ENCODE measurements at regions of chr22 and their contacts with region 1.

Region 1: DNA sequence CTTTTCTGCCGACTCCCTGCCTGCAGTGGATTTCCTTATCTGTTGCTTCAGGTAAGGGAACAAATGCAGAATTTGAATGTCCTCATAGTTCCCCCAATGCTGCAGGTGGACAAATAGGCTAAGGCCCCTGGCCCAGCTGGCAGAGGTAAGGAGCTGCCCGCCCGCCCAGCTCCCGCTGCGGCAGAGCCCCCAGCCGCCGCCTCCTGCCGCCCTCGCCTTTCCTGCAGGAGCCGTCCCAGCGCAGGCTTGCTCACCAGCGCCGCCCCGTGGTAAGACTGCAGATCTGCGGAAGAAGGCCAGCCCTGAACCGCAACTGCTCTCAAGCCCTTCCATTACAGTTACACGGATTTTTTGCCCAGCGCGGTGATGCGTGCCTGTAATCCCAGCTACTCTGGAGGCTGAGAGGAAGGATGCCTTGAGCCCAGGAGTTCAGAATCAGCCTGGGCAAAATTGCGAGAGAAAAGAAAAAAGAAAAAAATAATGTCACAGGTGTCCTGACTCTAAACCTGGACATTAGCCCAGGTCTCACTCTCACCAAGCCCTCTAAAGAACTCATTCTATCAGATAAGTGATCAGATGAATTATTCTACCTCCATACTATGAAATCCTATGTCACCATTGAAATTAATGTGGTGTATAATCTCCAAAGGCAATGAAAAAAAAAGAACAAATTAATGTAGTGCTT is 51.2 kb upstream of the EMID1 start:
- DNase-seq: peak; percentile 89
- ATAC-seq: peak; percentile 58
- H3K4me3 Mint-ChIP-seq: no peak overlapping the region
- H3K27ac Mint-ChIP-seq: no peak overlapping the region
- H3K4me1 Mint-ChIP-seq: peaks cover 49% of the 10 kb centered on the region
- H3K27me3 Mint-ChIP-seq: 0 out of 2 replicates have a peak, but pooled peaks cover 2% of the 10 kb centered on the region
- CTCF ChIP-seq: peak; percentile 97

Region 2: GRCh38 chr22:29040385-29041275 is 113.9 kb before region 1 on chr22:
- CTCF ChIA-PET with region 1: interaction called, 43 read pairs
- POLR2A ChIA-PET with region 1: no interaction called
- DNase-seq: peak; percentile 68
- ATAC-seq: peak; percentile 81
- H3K4me3 Mint-ChIP-seq: no peak overlapping the region
- H3K27ac Mint-ChIP-seq: peak overlapping the region; percentile 72
- H3K4me1 Mint-ChIP-seq: peaks cover 3% of the 10 kb centered on the region; the same call in 1 of the 2 replicates
- H3K27me3 Mint-ChIP-seq: no peaks in the 10 kb centered on the region
- CTCF ChIP-seq: peak; percentile 90

Region 3: GRCh38 chr22:29062286-29062821 is 92.2 kb before region 1 on chr22:
- CTCF ChIA-PET with region 1: interaction called, 22 read pairs
- POLR2A ChIA-PET with region 1: no interaction called
- DNase-seq: no peak
- ATAC-seq: peak; percentile 73
- H3K4me3 Mint-ChIP-seq: no peak overlapping the region
- H3K27ac Mint-ChIP-seq: no peak overlapping the region
- H3K4me1 Mint-ChIP-seq: peaks cover 22% of the 10 kb centered on the region
- H3K27me3 Mint-ChIP-seq: no peaks in the 10 kb centered on the region; the same call in 1 of the 2 replicates
- CTCF ChIP-seq: no peak

Region 4: GRCh38 chr22:29096736-29097669 is 57.5 kb before region 1 on chr22:
- CTCF ChIA-PET with region 1: interaction called, 12 read pairs
- POLR2A ChIA-PET with region 1: no interaction called
- DNase-seq: peak; percentile 18
- ATAC-seq: peak; percentile 62
- H3K4me3 Mint-ChIP-seq: no peak overlapping the region
- H3K27ac Mint-ChIP-seq: no peak overlapping the region
- H3K4me1 Mint-ChIP-seq: peaks cover 24% of the 10 kb centered on the region
- H3K27me3 Mint-ChIP-seq: no peaks in the 10 kb centered on the region
- CTCF ChIP-seq: no peak

Region 5: GRCh38 chr22:29134448-29134847 is 20.1 kb before region 1 on chr22:
- CTCF ChIA-PET with region 1: interaction called, 66 read pairs
- POLR2A ChIA-PET with region 1: no interaction called
- DNase-seq: no peak
- ATAC-seq: no peak
- H3K4me3 Mint-ChIP-seq: no peak overlapping the region
- H3K27ac Mint-ChIP-seq: no peak overlapping the region
- H3K4me1 Mint-ChIP-seq: peaks cover 3% of the 10 kb centered on the region; the same call in 1 of the 2 replicates
- H3K27me3 Mint-ChIP-seq: no peaks in the 10 kb centered on the region
- CTCF ChIP-seq: no peak

Region 6: DNA sequence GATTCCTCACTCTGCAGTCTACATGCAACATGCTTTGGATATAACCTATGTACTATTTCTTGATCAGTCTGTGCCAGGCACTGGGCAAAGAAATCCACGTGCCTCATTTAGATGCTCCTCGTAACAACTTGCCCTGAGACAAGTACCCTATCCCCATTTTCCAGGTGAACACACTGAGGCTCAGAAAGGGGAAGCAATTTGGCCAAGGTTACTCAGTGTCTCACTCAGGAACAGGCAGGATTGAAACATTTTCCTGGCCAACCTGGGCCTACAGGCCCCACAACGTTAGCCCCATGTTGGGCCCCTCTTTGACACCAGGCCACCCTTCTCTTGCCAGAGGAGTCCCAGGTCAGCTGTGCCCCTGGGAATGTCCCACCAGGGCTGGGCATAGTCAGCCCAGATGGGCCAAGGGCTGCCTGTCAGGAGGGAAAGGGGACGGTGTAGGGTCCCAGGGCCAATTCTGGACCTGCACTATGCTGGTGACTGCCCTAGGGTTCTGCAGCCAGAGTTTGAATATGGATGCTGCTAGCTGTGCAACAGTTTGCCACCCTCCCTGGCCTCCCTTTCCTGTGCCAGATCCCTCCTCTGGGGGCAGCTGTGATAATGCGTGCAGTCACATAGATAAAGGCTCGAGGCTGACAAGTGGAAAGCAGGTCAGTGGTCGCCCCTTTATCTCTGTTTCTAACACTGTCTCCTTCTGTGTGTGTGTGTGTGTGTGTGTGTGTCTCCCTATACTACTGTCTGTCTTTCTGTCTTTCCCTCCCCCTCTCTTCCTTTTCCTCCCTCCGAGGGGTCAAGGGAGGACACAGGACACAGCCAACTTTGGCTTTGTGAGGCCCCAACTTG is 40.8 kb after region 1 on chr22:
- CTCF ChIA-PET with region 1: interaction called, 11 read pairs
- POLR2A ChIA-PET with region 1: no interaction called
- DNase-seq: no peak
- ATAC-seq: no peak; the same call in 1 of the 2 replicates
- H3K4me3 Mint-ChIP-seq: no peak overlapping the region
- H3K27ac Mint-ChIP-seq: no peak overlapping the region
- H3K4me1 Mint-ChIP-seq: no peaks in the 10 kb centered on the region
- H3K27me3 Mint-ChIP-seq: no peaks in the 10 kb centered on the region
- CTCF ChIP-seq: no peak

Region 7: GRCh38 chr22:29245637-29246385 is 91.3 kb after region 1 on chr22:
- CTCF ChIA-PET with region 1: interaction called, 29 read pairs
- POLR2A ChIA-PET with region 1: no interaction called
- DNase-seq: peak; percentile 80
- ATAC-seq: peak; percentile 95
- H3K4me3 Mint-ChIP-seq: no peak overlapping the region
- H3K27ac Mint-ChIP-seq: no peak overlapping the region
- H3K4me1 Mint-ChIP-seq: no peaks in the 10 kb centered on the region
- H3K27me3 Mint-ChIP-seq: peaks cover 16% of the 10 kb centered on the region
- CTCF ChIP-seq: peak; percentile 99

Measured in WTC11 (cell line).